Activated CD8-positive, alpha-beta T cell treated with anti-CD3 and anti-CD28 coated beads for 36 hours (primary cell): ENCODE measurements at regions of chr15 and their contacts with region 1.

Region 1: GRCh38 chr15:72491768-72492167 is 17.6 kb downstream of the ARIH1 start:
- DNase-seq: no peak
- ATAC-seq: peak; percentile 62
- H3K4me3 Mint-ChIP-seq: no peak overlapping the region
- H3K27ac Mint-ChIP-seq: no peak overlapping the region
- H3K4me1 Mint-ChIP-seq: peaks cover 69% of the 10 kb centered on the region
- H3K27me3 Mint-ChIP-seq: no peaks in the 10 kb centered on the region
- CTCF ChIP-seq: no peak

Region 2: GRCh38 chr15:72473614-72474465 is 17.9 kb before region 1 on chr15 and contains the start of gene ARIH1:
- CTCF ChIA-PET with region 1: interaction called, 5 read pairs
- POLR2A ChIA-PET with region 1: interaction called, 19 read pairs
- intact Hi-C with region 1: no loop called
- DNase-seq: peak; percentile 95
- ATAC-seq: peak; percentile 78
- H3K4me3 Mint-ChIP-seq: peak within 1 kb of the TSS; percentile 97
- H3K27ac Mint-ChIP-seq: peak within 1 kb of the TSS; percentile 87
- H3K4me1 Mint-ChIP-seq: peaks cover 31% of the 10 kb centered on the region
- H3K27me3 Mint-ChIP-seq: no peaks in the 10 kb centered on the region
- CTCF ChIP-seq: no peak
- total RNA-seq, gene ARIH1: 170 to 175 TPM

Region 3: DNA sequence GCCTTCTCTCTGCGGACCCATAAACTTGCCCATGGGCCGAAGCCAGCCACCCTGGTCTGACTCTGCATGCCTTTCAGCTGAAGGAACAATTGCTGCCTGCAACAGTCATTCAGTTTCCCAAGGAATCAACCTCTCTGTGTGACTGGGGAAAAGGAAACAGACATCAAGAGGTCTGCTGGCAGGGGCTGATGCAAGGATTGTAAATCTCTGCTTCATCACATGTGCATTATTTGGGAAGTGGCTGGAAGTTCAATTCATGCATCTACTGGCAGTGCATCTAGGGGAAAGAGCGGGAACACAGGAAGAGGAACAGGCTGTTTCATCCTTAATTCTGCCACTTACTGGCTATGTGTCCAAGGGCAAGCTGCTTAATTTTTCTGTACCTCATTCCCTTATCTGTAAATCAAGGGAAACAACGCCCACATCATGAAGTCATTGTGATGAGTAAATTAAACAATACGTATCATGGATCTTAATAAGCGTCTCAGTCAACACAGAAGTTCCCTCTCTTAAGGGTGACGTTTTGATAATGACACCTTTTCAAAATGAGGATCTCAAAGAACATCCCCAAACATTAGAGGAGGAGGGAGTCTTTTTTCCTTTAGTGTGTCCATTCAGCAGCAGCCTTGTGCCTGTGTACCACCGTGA is 309.2 kb after region 1 on chr15:
- CTCF ChIA-PET with region 1: no interaction called
- POLR2A ChIA-PET with region 1: no interaction called
- intact Hi-C with region 1: no loop called
- DNase-seq: no peak
- ATAC-seq: no peak
- H3K4me3 Mint-ChIP-seq: no peak overlapping the region
- H3K27ac Mint-ChIP-seq: no peak overlapping the region
- H3K4me1 Mint-ChIP-seq: peaks cover 9% of the 10 kb centered on the region
- H3K27me3 Mint-ChIP-seq: peaks cover 29% of the 10 kb centered on the region
- CTCF ChIP-seq: no peak